HepG2 (cell line): ENCODE measurements at regions of chr17 and their contacts with region 1.

Region 1: DNA sequence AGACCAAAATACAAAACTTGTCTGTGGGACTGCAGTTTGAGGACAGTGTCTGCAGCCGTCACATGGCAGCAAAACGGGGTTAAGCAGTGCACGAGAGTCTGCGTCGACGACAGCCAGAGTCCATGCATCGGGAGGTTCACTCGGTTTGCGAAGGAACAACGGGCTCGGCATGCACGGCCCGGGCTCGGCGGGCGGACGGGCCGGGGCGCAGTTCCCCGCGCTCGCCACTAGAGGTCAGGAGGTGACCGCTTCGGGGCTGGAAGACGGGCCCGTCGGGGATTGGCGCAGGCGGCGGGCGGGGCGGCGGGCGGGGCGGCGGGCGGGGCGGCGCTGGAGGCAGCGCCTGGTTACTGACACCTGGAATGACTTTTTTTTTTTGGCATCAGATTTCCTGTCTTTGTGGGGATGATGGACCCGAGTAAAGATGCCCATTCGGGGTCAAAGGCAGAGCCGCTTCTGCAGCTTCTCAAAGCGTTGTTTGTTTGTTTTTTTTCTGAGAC is 6.5 kb downstream of the SCGB1C2 start:
- DNase-seq: peak; percentile 48
- ATAC-seq: peak; percentile 72
- H3K4me3 ChIP-seq: no peak overlapping the region; a peak in 1 of 6 replicates
- H3K27ac ChIP-seq: no peak overlapping the region
- H3K4me1 ChIP-seq: peaks cover 23% of the 10 kb centered on the region
- H3K27me3 ChIP-seq: peaks cover 2 to 30% of the 10 kb centered on the region in 2 experiments; a peak in 3 of 5 replicates
- CTCF ChIP-seq: peak; percentile 91
- EP300 ChIP-seq: no peak
- POLR2A ChIP-seq: no peak
- RAD21 ChIP-seq: peak; percentile 89

Region 2: GRCh38 chr17:153851-154250 is 10.0 kb after region 1 on chr17:
- CTCF ChIA-PET with region 1: no interaction called
- POLR2A ChIA-PET with region 1: no interaction called
- in situ Hi-C with region 1: no loop called
- intact Hi-C with region 1: no loop called
- DNase-seq: no peak
- ATAC-seq: no peak
- H3K4me3 ChIP-seq: no peak overlapping the region
- H3K27ac ChIP-seq: no peak overlapping the region
- H3K4me1 ChIP-seq: peaks cover 29% of the 10 kb centered on the region
- H3K27me3 ChIP-seq: peaks cover 1 to 18% of the 10 kb centered on the region in 2 experiments; a peak in 3 of 5 replicates
- CTCF ChIP-seq: no peak
- EP300 ChIP-seq: no peak
- POLR2A ChIP-seq: no peak
- RAD21 ChIP-seq: no peak

Region 3: DNA sequence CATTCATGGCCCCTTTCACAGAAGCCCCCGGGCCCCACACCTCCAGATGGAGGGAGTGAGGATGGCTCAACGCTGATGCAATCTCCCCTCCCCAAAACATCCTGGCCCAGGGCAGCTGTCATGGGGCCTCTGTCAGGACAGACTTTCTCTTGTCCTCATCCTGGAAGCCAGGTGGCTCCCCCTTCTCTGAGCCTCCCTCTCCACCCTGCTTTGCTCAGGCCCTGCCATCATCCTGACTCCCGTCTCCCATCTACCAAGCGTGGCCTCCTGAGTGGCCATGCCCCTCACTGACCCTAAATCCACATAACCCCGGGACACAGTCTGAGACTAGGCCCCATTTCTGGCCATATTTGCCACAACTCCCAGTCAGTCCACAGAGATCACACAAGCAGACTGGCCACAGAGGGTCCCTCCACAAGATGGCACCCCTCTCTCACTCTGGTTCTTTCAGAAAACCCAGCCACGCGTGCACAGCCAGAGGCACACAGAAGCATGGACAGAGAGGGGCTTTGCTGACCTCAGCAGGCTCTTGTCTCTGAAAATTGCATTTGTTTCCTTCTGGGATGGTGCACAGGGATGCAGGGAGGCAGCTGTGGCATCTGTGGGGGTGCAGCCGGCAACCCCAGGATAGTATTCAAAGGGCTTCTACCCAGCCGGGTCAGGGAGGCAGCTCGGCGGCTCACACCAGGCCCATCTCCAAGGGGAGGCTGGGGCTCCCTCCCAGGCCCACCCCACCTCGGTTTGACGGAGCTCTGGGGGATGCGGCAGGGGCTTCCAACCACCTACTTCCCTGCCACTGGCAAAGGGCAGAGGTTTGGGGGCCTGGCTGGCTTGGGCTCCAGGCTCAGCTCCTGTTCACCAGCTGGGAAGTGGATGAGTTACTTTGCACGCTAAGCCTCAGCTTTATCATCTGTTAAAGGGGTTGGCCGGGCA is 20.7 kb after region 1 on chr17:
- CTCF ChIA-PET with region 1: interaction called, 13 read pairs
- POLR2A ChIA-PET with region 1: no interaction called
- in situ Hi-C with region 1: no loop called
- intact Hi-C with region 1: loop called (anchors 2 kb)
- DNase-seq: peak; percentile 40
- ATAC-seq: peak; percentile 79
- H3K4me3 ChIP-seq: no peak overlapping the region; a peak in 1 of 6 replicates
- H3K27ac ChIP-seq: no peak overlapping the region
- H3K4me1 ChIP-seq: no peaks in the 10 kb centered on the region
- H3K27me3 ChIP-seq: peaks cover 8 to 44% of the 10 kb centered on the region in 2 experiments; a peak in 4 of 5 replicates
- CTCF ChIP-seq: peak; percentile 89
- EP300 ChIP-seq: no peak
- POLR2A ChIP-seq: no peak
- RAD21 ChIP-seq: peak; percentile 65; the same call in 1 of the 2 replicates